ENCODE measurements at regions of chr6 and their contacts with region 1.

Region 1: GRCh38 chr6:53359072-53359842 is 10.5 kb upstream of the ELOVL5 start:
- DNase-seq: peak; percentile 94
- H3K4me3 Mint-ChIP-seq: peak overlapping the region; percentile 90
- H3K27ac Mint-ChIP-seq: peak overlapping the region; percentile 96
- H3K4me1 Mint-ChIP-seq: peaks cover 39% of the 10 kb centered on the region
- H3K27me3 Mint-ChIP-seq: no peaks in the 10 kb centered on the region

Region 2: DNA sequence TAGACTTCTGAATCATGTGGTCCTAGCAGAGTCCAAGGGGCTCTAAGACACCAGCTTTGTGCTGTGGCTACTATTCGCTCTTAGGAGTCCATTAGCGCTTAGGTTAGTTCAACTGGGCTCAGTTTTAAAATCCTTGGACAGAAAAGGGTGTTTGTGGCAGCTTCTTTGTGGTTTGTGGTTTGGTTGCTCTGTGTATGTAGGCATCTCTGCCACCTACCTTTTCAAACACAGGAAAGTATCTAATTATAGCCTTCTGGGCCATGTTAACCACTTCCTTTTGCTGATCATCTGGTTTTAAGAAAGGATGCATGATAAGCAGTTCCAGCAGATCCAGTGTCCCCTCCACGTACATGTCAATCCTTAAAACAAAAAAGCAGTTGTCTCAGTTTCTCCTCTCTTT is 375.0 kb before region 1 on chr6:
- CTCF ChIA-PET with region 1: no interaction called
- intact Hi-C with region 1: loop called (anchors 2 kb)
- DNase-seq: peak; percentile 81
- H3K4me3 Mint-ChIP-seq: no peak overlapping the region
- H3K27ac Mint-ChIP-seq: peak overlapping the region; percentile 82
- H3K4me1 Mint-ChIP-seq: peaks cover 63% of the 10 kb centered on the region
- H3K27me3 Mint-ChIP-seq: peaks cover 8% of the 10 kb centered on the region

Region 3: DNA sequence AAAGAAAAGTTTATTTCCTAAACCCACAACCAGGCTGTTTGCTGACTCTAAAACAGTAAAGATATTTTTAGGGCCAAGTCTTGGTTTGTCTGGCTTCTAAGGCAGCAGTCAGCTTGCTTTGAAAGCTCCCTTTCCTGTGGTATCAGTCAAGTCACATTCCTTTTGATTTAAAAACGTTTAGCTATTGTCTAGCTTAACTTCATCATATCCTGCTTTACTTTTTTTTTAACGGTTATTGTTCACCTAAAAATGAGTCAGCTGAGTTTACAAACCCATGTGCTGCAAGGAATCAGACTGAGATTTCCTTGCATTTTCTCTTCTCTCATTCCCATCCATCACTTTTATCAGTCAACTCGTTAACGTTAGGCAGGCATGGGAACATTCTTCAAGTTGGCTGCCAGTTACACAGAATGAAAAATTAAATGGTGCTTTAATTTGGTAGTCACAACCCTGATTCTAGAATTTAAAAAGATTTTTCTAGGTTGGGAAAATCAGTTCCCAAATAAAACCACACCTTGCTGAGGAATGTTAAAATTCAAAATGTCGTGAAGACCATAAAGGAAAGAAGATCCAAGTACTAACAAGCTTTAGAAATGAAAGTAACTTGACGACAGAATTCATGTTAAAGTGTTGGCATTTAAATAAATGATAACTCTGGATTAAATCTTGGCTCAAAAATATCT is 56.4 kb before region 1 on chr6:
- CTCF ChIA-PET with region 1: no interaction called
- intact Hi-C with region 1: loop called (anchors 1 kb)
- DNase-seq: no peak
- H3K4me3 Mint-ChIP-seq: peak overlapping the region; percentile 28
- H3K27ac Mint-ChIP-seq: peak overlapping the region; percentile 48
- H3K4me1 Mint-ChIP-seq: peaks cover 76% of the 10 kb centered on the region
- H3K27me3 Mint-ChIP-seq: no peaks in the 10 kb centered on the region

Region 4: DNA sequence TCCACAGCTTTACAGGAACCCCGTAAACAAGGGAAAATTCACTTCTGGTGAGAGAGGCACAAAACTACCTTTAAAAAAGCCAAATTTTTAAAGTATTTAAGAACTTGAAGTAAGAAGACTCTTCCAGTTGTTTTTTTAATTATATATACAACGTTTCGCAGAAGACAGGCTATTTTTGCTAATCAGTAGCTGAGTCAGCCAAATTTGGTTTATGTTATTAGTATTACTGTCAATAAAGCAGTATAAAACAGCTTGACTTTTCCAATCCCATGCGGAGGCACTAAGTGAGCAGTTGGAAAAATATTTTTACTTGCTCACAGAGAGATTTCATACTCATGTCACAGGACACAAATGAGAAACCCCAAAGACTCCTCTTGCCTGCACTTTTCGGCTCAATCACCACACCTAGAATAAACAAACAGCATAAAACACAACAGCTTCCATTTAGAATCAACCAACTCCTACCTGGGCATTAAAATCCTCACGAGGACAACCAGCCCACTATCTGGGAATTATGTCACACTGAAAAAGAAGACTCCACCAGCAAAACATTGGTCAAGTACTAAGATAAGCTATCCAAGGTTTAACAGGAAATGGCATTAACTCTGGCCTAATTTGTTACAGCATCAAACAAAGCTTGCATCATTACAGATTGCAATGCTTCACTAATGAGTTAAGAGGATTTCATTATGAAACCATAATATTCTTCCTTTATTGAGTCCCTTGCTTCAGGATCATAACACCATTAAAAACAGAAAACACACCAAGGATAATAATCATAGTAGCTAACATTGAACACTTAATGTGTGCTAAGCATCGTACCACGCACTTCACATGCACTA is 36.8 kb before region 1 on chr6:
- CTCF ChIA-PET with region 1: no interaction called
- intact Hi-C with region 1: loop called (anchors 1 kb)
- DNase-seq: no peak
- H3K4me3 Mint-ChIP-seq: no peak overlapping the region
- H3K27ac Mint-ChIP-seq: peak overlapping the region; percentile 24
- H3K4me1 Mint-ChIP-seq: peaks cover 56% of the 10 kb centered on the region
- H3K27me3 Mint-ChIP-seq: no peaks in the 10 kb centered on the region

Region 5: GRCh38 chr6:53417140-53417539 is 57.9 kb after region 1 on chr6:
- CTCF ChIA-PET with region 1: no interaction called
- intact Hi-C with region 1: no loop called
- DNase-seq: no peak
- H3K4me3 Mint-ChIP-seq: no peak overlapping the region
- H3K27ac Mint-ChIP-seq: no peak overlapping the region
- H3K4me1 Mint-ChIP-seq: no peaks in the 10 kb centered on the region
- H3K27me3 Mint-ChIP-seq: no peaks in the 10 kb centered on the region

Measured in activated naive CD4-positive, alpha-beta T cell treated with anti-CD3 and anti-CD28 coated beads for 36 hours (primary cell).